ENCODE measurements at regions of chr2 and their contacts with region 1.

Region 1: GRCh38 chr2:113260991-113261390 is 17.7 kb downstream of the PAX8 start:
- DNase-seq: no peak
- H3K4me3 ChIP-seq: no peak overlapping the region
- H3K27ac ChIP-seq: no peak overlapping the region
- H3K4me1 ChIP-seq: no peaks in the 10 kb centered on the region
- H3K27me3 ChIP-seq: no peaks in the 10 kb centered on the region
- CTCF ChIP-seq: no peak

Region 2: GRCh38 chr2:113282747-113283533 is 21.9 kb after region 1 on chr2:
- CTCF ChIA-PET with region 1: no interaction called
- dilution Hi-C with region 1: no loop called
- in situ Hi-C with region 1: no loop called
- intact Hi-C with region 1: no loop called
- DNase-seq: peak; percentile 81
- H3K4me3 ChIP-seq: no peak overlapping the region
- H3K27ac ChIP-seq: peak overlapping the region; percentile 99
- H3K4me1 ChIP-seq: peaks cover 47% of the 10 kb centered on the region
- H3K27me3 ChIP-seq: no peaks in the 10 kb centered on the region
- CTCF ChIP-seq: peak; percentile 14 to 47

Region 3: DNA sequence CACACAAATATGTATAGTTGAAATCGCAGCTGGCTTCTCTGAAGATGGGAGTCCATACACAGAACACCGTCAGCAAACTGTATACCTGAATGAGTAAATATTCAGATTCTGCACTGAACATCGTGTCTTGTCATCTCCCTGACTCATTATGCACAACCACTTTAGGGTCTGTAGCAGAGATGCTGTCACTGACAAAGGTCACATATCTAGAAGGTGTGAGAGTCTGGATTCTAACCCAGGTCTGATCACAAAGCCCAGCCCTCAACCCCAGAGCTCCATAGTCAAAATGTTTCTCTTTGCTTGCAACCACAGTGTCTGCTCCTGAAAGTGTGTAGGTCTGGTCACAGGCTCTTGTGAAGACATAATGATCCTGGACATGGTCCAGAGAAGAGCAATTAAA is 96.1 kb after region 1 on chr2:
- CTCF ChIA-PET with region 1: no interaction called
- dilution Hi-C with region 1: no loop called
- in situ Hi-C with region 1: loop called in 1 of 2 experiments (anchors 10 kb)
- intact Hi-C with region 1: no loop called
- DNase-seq: no peak
- H3K4me3 ChIP-seq: no peak overlapping the region
- H3K27ac ChIP-seq: no peak overlapping the region
- H3K4me1 ChIP-seq: peaks cover 24% of the 10 kb centered on the region
- H3K27me3 ChIP-seq: no peaks in the 10 kb centered on the region
- CTCF ChIP-seq: no peak

Measured in mammary epithelial cell (primary cell).